ENCODE measurements at regions of chr5 and their contacts with region 1.

Region 1: DNA sequence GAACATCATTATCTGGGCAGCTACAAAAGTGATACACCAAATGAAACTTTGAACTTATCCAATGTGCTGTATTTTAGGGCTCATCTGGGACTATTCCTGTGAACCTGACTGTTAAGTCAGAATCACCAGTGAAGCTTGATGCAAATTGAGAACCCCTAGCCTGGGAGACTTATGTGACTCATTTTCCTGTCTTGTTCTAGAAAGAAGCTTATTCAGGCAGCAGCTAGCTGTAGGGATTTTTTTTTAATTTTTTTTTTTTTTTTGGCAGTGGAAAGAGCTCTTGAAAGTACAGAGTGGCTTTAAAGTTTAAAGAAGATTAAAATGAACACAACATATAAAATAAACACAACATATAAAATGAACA is 81.1 kb upstream of the TNFAIP8 start:
- DNase-seq: no peak
- H3K4me3 ChIP-seq: no peak overlapping the region
- H3K4me3 Mint-ChIP-seq: peak overlapping the region; percentile 40
- H3K27ac Mint-ChIP-seq: peak overlapping the region; percentile 85
- H3K4me1 ChIP-seq: peaks cover 26% of the 10 kb centered on the region
- H3K4me1 Mint-ChIP-seq: peaks cover 20% of the 10 kb centered on the region
- H3K27me3 ChIP-seq: no peaks in the 10 kb centered on the region
- H3K27me3 Mint-ChIP-seq: no peaks in the 10 kb centered on the region
- CTCF ChIP-seq: no peak

Region 2: DNA sequence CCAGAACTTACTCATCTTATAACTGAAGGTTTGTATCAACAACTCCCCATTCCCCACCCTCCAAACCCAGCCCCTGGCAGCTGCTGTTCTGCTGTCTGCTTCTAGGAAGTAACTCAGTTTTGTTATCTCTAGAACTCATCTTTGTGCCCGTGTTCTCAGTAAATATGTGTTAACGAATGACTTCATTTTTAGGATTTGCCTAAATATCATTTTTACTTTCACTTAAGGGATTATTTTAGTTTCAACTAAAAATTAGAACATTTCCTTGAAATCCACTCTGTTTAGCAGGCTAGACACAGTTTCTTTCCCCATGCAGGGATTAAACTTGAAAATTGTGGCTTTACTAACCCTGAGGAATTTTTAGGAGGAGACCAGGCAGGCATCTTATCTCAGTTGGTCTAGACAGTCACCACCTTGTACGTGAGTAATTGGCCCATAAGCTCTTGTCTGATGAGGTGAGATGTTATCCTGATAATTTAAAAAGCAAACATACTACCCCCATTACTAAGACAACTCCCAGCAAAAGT is 12.9 kb after region 1 on chr5:
- CTCF ChIA-PET with region 1: no interaction called
- POLR2A ChIA-PET with region 1: interaction called, 3 read pairs
- intact Hi-C with region 1: loop called (anchors 1 kb)
- DNase-seq: no peak
- H3K4me3 ChIP-seq: no peak overlapping the region
- H3K4me3 Mint-ChIP-seq: peak overlapping the region; percentile 45
- H3K27ac Mint-ChIP-seq: peak overlapping the region; percentile 13
- H3K4me1 ChIP-seq: peaks cover 49% of the 10 kb centered on the region
- H3K4me1 Mint-ChIP-seq: peaks cover 42% of the 10 kb centered on the region
- H3K27me3 ChIP-seq: no peaks in the 10 kb centered on the region
- H3K27me3 Mint-ChIP-seq: no peaks in the 10 kb centered on the region
- CTCF ChIP-seq: no peak

Region 3: DNA sequence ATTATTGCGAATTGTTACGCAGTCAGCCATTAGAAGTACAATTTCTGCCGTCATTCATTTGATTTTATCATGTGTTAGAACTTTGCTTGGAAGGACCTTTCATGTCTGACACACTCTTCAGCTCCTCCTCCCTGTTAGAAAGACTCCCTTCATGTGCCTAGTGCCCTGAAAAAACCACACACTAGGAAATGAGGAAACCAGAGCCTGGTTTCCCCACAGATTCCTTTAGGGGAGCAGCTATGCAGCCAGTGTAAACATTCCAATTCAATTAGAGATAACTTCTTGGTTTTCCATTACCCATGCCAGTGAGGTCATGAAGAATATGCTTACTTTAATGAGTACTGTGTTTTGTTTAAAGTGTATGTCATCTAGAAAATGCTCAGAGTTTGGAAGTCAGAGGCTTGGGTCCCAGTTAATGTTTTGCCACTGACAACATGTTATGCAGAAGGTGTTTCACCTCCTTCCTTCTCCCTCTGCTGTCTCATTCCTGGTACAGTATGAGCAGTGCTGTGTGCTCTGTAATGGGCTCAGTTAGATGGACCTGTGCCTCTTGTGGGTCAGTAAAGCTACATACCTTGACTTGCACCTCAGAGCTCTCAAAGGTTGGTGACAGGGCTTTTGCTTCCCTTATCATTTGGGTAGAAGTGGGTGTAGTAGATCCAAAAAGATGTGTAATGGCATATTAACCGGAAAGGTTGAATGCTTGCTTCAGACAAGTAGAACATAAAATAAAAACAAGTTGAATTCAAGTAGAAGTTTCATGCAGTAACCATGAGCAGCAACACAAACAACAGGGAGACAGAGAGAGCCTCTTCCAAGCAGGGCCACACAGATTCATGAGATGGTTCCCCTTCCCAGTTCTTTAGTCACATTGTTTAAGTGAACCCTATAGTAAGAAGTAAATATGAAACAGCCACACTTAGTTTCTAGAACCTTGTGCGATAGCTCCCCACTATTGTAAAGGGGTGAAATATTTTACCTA is 28.5 kb after region 1 on chr5:
- CTCF ChIA-PET with region 1: no interaction called
- POLR2A ChIA-PET with region 1: interaction called, 3 read pairs
- intact Hi-C with region 1: loop called (anchors 1 kb)
- DNase-seq: peak; percentile 68 to 76
- H3K4me3 ChIP-seq: no peak overlapping the region
- H3K4me3 Mint-ChIP-seq: peak overlapping the region; percentile 45
- H3K27ac Mint-ChIP-seq: peak overlapping the region; percentile 85
- H3K4me1 ChIP-seq: peaks cover 31% of the 10 kb centered on the region
- H3K4me1 Mint-ChIP-seq: peaks cover 31% of the 10 kb centered on the region
- H3K27me3 ChIP-seq: no peaks in the 10 kb centered on the region
- H3K27me3 Mint-ChIP-seq: no peaks in the 10 kb centered on the region
- CTCF ChIP-seq: peak; percentile 16 to 21

Region 4: DNA sequence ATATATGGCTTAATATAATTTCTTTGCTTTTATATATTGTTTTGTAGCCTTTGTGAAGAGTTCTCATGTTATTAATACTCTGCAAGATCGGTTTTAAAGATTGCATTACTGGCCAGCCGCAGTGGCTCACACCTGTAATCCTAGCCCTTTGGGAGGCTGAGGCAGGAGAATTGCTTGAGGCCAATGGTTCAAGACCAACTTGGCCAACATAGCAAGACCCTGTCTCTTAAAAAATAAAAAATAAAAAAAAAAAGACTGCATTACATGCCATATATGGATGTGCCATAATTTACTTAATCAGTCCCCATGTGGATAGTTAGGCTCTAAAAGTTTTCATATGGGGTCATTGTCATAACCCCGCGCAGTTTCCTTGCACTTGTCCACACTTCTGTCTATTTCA is 50.1 kb after region 1 on chr5:
- CTCF ChIA-PET with region 1: no interaction called
- POLR2A ChIA-PET with region 1: no interaction called
- intact Hi-C with region 1: loop called (anchors 2 kb)
- DNase-seq: no peak
- H3K4me3 ChIP-seq: no peak overlapping the region
- H3K4me3 Mint-ChIP-seq: no peak overlapping the region
- H3K27ac Mint-ChIP-seq: no peak overlapping the region
- H3K4me1 ChIP-seq: peaks cover 31% of the 10 kb centered on the region
- H3K4me1 Mint-ChIP-seq: peaks cover 36% of the 10 kb centered on the region
- H3K27me3 ChIP-seq: no peaks in the 10 kb centered on the region
- H3K27me3 Mint-ChIP-seq: no peaks in the 10 kb centered on the region
- CTCF ChIP-seq: no peak

Measured in Caco-2 (cell line).